Right ventricle myocardium inferior (tissue), 1 donor: ENCODE measurements at regions of chr6 and their contacts with region 1.

Region 1: GRCh38 chr6:34392497-34393190 is at the start of gene NUDT3:
- DNase-seq: peak; percentile 97
- ATAC-seq: peak; percentile 94
- total RNA-seq, gene NUDT3: 47.6 TPM

Region 2: DNA sequence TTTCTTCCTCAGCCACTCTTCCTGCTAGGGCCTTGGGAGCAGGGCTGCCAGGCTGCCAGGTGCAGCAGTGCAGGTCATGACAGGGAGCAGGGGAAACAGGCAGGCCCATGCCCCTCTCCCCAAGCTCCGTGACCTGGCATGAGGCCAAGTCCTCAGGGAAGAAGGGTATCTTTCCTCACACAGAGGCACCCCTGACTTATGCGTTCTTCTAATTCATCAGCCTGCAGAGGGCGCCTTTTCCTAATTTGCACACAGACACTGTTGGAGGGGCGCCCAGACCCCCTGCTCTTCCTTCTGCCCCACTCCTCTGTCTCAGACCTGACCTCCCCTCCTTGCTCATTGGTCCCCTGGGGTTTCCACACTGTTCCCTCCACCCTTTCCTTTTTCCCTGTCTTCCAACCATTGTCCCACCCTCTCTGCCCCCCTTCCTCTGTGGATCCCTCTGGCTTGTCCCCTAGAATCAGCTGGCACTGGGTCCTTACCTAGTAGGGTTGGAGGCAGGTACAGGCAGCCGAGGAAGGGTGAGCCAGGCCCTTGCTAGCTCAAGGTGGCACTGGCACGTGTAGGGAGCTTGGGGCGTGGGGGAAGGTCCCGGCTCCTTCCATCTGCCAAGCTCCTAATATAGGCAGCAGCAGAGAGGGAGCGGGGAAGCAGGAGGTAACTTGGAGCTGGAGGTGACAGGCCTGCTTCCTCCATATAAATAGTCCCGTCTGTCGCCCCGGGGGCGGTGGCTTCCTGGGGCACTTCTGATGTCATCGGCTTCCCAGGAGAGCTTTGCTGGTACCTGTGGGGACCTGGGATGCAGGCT is 433.9 kb before region 1 on chr6:
- intact Hi-C with region 1: no loop called
- DNase-seq: peak; percentile 65
- ATAC-seq: no peak

Region 3: GRCh38 chr6:34248727-34249551 is 143.7 kb before region 1 on chr6 and contains the start of gene SMIM29:
- intact Hi-C with region 1: loop called (anchors 1 kb)
- DNase-seq: peak; percentile 98
- ATAC-seq: peak; percentile 94
- total RNA-seq, gene SMIM29: 20.7 TPM

Region 4: DNA sequence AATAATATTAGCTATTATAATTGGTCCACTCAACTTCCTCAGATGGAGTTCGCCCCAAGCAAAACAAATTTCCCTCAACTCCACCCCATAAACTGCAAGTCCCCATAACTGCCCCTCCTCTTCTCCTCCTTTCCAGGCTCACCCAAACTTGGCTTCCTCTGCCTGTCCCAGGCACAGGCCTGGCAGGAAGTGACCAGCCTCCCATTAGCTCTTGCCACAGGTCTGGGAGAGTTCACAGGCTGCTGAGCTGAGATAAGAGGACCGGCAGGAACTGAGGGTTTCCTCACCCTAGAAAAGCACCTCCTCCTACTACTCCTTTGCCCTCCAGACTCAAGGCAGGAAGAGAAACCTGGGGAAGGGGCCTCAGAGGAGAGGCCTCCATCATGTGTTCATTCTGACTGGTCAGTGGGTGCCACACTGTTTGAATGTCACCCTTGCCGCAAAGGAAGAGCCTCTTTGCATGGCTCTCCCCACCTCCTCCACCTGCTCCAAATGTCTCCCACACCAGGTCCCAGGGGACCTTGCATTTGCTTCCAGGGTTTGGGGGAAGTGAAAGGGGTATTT is 119.3 kb before region 1 on chr6:
- intact Hi-C with region 1: loop called (anchors 10 kb)
- DNase-seq: peak; percentile 80
- ATAC-seq: peak; percentile 75

Region 5: GRCh38 chr6:34301408-34301807 is 91.2 kb before region 1 on chr6:
- intact Hi-C with region 1: loop called (anchors 2 kb)
- DNase-seq: peak; percentile 75
- ATAC-seq: peak; percentile 95

Region 6: DNA sequence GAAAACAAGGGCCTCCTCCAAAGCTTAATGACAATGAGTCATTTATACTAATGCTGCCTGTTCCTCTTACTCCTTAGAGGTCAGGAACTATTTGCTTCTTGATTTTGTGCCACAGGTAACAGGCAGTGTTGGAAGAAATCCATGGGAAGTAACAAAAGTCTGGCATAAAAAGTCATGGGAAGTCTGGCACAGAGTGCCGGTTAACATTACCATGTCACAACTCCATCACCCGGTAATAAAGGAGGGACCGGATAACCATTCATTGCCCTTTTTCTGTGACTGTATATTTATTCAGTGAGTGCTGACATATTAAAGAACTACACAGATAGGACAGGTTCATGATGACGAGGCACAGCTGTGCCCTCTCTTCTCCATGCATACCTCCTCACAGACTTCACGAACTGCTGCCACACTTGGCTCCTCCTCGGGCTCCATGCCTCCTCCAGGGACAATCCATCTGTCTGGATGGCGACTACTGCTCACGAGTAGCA is 51.1 kb before region 1 on chr6:
- intact Hi-C with region 1: loop called (anchors 5 kb)
- DNase-seq: no peak
- ATAC-seq: peak; percentile 78

Region 7: GRCh38 chr6:34414999-34415858 is 22.6 kb after region 1 on chr6:
- intact Hi-C with region 1: loop called (anchors 2 kb)
- DNase-seq: no peak
- ATAC-seq: peak; percentile 94

Region 8: GRCh38 chr6:34425498-34426410 is 33.1 kb after region 1 on chr6 and contains the start of gene RPS10:
- intact Hi-C with region 1: loop called (anchors 1 kb)
- DNase-seq: peak; percentile 97
- ATAC-seq: peak; percentile 99
- total RNA-seq, gene RPS10: 718 TPM

Region 9: DNA sequence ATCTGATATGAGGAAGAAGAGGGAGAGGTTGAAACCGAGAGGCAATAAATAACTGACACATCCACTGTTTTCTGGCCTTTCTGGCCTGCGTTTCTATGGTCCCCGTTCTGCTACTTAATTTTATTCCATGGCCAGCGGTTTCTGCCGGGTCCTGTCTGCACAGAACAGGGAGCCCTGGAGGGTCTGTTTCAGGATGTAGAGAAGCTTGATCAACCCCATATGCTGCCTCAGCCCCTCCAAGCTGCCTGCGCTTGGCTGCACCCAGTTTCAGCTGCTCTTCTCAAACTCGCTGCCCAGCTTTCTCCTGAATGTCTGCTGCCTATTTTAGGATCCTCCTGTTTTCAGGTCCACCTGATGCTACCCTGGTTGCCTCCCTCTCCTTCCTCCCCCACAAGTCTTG is 54.7 kb after region 1 on chr6:
- intact Hi-C with region 1: no loop called
- DNase-seq: no peak
- ATAC-seq: no peak

Region 10: GRCh38 chr6:34855463-34855862 is 462.8 kb after region 1 on chr6:
- intact Hi-C with region 1: no loop called
- DNase-seq: no peak
- ATAC-seq: no peak